ENCODE measurements at regions of chr6 and their contacts with region 1.

Region 1: GRCh38 chr6:125201961-125202591 is 48.5 kb downstream of the TPD52L1 start:
- DNase-seq: peak; percentile 87
- H3K4me3 ChIP-seq: no peak overlapping the region
- H3K27ac ChIP-seq: peak overlapping the region; percentile 91
- H3K27me3 ChIP-seq: no peaks in the 10 kb centered on the region
- CTCF ChIP-seq: no peak

Region 2: GRCh38 chr6:125191916-125192609 is 10.0 kb before region 1 on chr6:
- CTCF ChIA-PET with region 1: interaction called, 20 read pairs
- POLR2A ChIA-PET with region 1: interaction called, 3 read pairs
- DNase-seq: peak; percentile 66
- H3K4me3 ChIP-seq: no peak overlapping the region
- H3K27ac ChIP-seq: no peak overlapping the region
- H3K27me3 ChIP-seq: no peaks in the 10 kb centered on the region
- CTCF ChIP-seq: peak; percentile 83

Measured in AG04450 (cell line).